ENCODE measurements at regions of chr1 and their contacts with region 1.

Region 1: DNA sequence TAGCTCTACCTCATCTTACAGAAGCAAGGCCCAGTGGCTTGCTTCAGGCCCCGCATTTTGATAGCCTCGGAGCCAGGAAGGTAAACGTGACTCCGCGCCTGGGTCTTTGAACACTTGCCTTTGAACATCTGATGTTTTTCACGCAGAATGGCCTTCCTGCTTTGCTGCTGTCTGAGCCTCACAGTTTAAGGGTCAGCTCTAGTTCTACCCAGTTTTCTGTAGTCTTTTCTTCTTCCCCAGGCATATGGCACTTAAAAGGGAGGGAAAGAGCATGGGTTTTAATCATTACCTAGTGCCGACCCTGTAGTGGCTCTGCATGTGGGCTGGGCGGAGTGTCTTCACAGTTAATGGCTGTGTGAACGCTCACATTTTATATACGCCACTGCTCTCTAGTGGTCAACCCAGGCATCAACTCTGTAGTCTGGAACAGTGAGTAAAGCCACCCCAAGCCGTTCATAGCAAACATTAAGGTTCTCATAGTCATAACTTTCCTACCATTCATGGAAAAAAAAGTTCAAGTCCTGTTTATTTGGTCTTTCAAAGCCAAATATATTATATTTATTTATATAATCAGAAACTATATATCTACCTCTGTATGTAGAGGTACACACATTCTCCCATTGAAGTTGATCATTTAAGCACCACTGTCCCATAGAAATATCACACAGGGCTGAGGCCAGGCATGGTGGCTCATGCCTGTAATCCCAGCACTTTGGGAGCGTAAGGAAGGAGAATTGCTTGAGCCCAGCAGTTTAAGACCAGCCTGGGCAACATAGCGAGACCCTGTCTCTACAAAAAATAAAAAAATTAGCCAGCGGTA is 78.1 kb downstream of the IER5 start:
- DNase-seq: peak; percentile 82 to 90 (median 84)
- ATAC-seq: peak; percentile 100
- H3K4me3 ChIP-seq: no peak overlapping the region
- H3K27ac ChIP-seq: no peak overlapping the region; the same call in 2 of the 3 replicates
- H3K4me1 ChIP-seq: no peaks in the 10 kb centered on the region; a peak in 1 of 5 replicates
- H3K27me3 ChIP-seq: no peaks in the 10 kb centered on the region
- CTCF ChIP-seq: peak; percentile 89 to 97 (median 94)
- EP300 ChIP-seq: no peak; the same call in 1 of the 2 replicates
- POLR2A ChIP-seq: no peak
- RAD21 ChIP-seq: peak; percentile 96 to 99

Region 2: GRCh38 chr1:180252638-180253536 is 913.7 kb before region 1 on chr1:
- CTCF ChIA-PET with region 1: no interaction called
- POLR2A ChIA-PET with region 1: no interaction called
- in situ Hi-C with region 1: loop called (anchors 25 kb)
- intact Hi-C with region 1: no loop called
- DNase-seq: peak; percentile 81 to 88 (median 86)
- ATAC-seq: peak; percentile 82
- H3K4me3 ChIP-seq: no peak overlapping the region
- H3K27ac ChIP-seq: no peak overlapping the region
- H3K4me1 ChIP-seq: peaks cover 0 to 21% of the 10 kb centered on the region in 2 experiments; a peak in 3 of 5 replicates
- H3K27me3 ChIP-seq: peaks cover 17 to 47% of the 10 kb centered on the region in 2 experiments; a peak in 4 of 5 replicates
- CTCF ChIP-seq: peak; percentile 96 to 99 (median 98)
- EP300 ChIP-seq: no peak
- POLR2A ChIP-seq: no peak
- RAD21 ChIP-seq: peak; percentile 87 to 97

Region 3: DNA sequence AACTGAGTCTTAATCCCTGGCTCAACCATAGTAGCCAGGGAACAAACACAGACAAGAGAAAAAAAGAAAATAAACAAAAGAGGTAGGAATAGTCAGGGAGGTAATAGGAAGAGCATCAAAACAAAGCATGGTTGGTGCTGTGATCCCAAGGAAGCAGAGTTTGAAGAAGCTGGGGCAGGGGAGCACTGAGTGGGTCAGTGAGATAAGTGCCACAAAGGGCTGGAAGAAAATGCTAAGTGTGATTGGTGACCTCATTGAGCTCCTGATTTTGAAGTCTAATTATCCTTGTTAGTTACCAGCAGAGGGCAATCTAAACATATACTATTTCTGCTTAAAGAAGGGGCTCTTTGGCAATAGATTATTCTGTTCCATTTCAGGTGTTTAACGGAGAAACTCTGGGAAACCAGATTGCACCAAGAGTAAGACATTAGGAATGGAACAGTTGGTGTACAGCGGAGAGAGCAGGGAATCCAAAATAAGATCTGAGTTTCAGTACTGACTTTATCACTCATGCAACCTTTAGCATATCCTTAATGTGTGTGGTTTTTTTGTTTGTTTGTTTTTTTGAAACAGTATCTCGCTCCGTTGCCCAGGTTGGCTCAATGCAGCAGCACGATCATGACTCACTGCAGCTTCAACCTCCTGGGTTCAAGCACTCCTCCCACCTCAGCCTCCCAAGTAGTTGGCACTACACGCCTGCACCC is 284.6 kb before region 1 on chr1:
- CTCF ChIA-PET with region 1: interaction called, 8 read pairs
- POLR2A ChIA-PET with region 1: interaction called, 3 read pairs
- in situ Hi-C with region 1: loop called (anchors 5 kb)
- intact Hi-C with region 1: loop called (anchors 1 kb)
- DNase-seq: peak; percentile 52 to 76 (median 68)
- ATAC-seq: peak; percentile 97
- H3K4me3 ChIP-seq: no peak overlapping the region
- H3K27ac ChIP-seq: no peak overlapping the region
- H3K4me1 ChIP-seq: peaks cover 0 to 3% of the 10 kb centered on the region in 2 experiments; a peak in 1 of 5 replicates
- H3K27me3 ChIP-seq: no peaks in the 10 kb centered on the region
- CTCF ChIP-seq: peak; percentile 45 to 80 (median 67); a peak in 5 of 6 replicates
- EP300 ChIP-seq: no peak
- POLR2A ChIP-seq: no peak
- RAD21 ChIP-seq: peak; percentile 85 to 91

Region 4: DNA sequence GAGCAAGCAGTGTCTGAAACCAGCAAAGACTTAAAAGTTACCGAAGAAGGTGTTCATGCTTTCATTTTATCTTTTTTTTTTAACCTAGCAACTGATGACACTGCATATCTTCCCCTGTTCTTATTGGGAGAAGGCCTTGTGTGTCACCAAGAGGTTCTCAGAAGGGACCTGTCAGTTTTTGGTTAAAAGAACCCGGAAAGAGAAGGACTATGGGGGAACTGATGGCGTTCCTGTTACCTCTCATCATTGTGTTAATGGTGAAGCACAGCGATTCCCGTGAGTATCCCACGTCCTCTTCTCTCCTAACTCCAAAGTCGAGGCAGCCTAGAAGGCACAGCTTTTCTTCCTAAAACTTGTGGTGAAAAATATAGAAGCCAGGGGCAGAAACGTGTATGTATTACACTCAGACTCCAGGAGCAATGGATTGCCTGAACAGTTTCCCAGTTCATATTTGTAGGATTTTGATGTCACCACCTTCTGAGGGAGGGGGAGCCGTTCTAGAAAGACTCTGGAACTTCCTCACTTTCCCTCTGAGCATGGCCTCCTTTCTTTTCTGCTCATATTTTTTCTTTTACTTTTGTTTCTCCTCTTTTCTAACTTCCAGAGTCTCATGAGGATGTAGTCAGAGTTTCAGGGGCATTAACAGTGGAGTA is 132.7 kb before region 1 on chr1 and contains the start of gene MR1:
- CTCF ChIA-PET with region 1: interaction called, 12 read pairs
- POLR2A ChIA-PET with region 1: no interaction called
- in situ Hi-C with region 1: no loop called
- intact Hi-C with region 1: loop called (anchors 1 kb)
- DNase-seq: peak; percentile 87 to 91 (median 89)
- ATAC-seq: peak; percentile 93
- H3K4me3 ChIP-seq: peak within 1 kb of the TSS; percentile 42
- H3K27ac ChIP-seq: peak within 1 kb of the TSS; percentile 74
- H3K4me1 ChIP-seq: peaks cover 9 to 36% of the 10 kb centered on the region in 2 experiments; a peak in 4 of 5 replicates
- H3K27me3 ChIP-seq: no peaks in the 10 kb centered on the region
- CTCF ChIP-seq: no peak
- EP300 ChIP-seq: no peak
- POLR2A ChIP-seq: peak; percentile 84
- RAD21 ChIP-seq: no peak
- polyA plus RNA-seq, gene MR1: 15.6 to 19.8 TPM

Region 5: DNA sequence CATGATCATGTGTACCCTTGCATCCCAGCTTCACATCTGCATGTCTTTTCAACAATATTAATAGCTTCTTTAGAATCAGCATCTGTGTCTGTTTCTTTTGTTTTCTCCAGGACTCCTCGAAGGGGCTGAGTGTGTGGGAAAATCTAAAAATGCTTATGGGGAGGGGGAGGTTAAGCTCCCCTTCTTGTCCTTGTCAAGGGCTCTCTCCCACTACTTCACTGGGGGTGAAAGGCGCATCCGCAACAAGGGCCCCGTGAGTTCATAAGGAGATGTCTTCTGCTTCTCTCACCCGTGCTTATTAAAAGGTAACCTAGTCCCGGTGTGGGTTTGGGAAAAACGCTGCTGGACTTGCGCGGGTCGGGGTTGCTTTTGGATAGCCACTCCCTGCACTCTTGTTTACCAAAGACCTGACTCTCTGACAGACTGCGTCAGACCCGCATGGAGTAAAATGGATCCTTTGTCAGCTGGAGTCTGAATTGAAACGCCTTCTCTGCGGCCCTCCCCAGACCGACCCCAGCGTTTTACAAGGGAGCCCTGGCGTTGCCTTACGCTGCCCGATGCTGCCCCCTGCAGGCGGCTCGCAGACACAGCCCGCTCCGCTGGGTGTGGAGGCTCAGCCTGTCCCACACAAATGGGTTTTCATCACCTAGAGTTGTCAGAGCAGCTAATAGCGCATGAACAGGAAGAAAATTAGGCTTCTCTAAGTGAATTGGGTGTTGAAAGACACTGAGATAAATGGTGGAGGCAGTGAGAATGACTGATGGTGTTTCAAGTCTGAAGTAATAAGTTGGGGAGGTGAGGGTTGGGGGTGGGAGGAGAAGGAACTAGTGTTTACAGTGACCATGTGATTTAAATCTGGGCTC is 24.3 kb before region 1 on chr1:
- CTCF ChIA-PET with region 1: no interaction called
- POLR2A ChIA-PET with region 1: no interaction called
- in situ Hi-C with region 1: no loop called
- intact Hi-C with region 1: loop called (anchors 1 kb)
- DNase-seq: peak; percentile 90 to 94 (median 94)
- ATAC-seq: peak; percentile 98
- H3K4me3 ChIP-seq: no peak overlapping the region
- H3K27ac ChIP-seq: peak overlapping the region; percentile 36; the same call in 1 of the 3 replicates
- H3K4me1 ChIP-seq: peaks cover 20 to 28% of the 10 kb centered on the region in 2 experiments
- H3K27me3 ChIP-seq: no peaks in the 10 kb centered on the region
- CTCF ChIP-seq: peak; percentile 98 to 100 (median 99)
- EP300 ChIP-seq: peak; percentile 46; the same call in 1 of the 2 replicates
- POLR2A ChIP-seq: no peak
- RAD21 ChIP-seq: peak; percentile 100

Region 6: GRCh38 chr1:181152892-181153633 is 13.5 kb before region 1 on chr1:
- CTCF ChIA-PET with region 1: interaction called, 4 read pairs
- POLR2A ChIA-PET with region 1: interaction called, 4 read pairs
- in situ Hi-C with region 1: no loop called
- intact Hi-C with region 1: loop called (anchors 1 kb)
- DNase-seq: peak; percentile 90 to 99 (median 94)
- ATAC-seq: peak; percentile 98
- H3K4me3 ChIP-seq: no peak overlapping the region
- H3K27ac ChIP-seq: peak overlapping the region; percentile 65
- H3K4me1 ChIP-seq: peaks cover 27 to 31% of the 10 kb centered on the region in 2 experiments
- H3K27me3 ChIP-seq: no peaks in the 10 kb centered on the region
- CTCF ChIP-seq: peak; percentile 71 to 86 (median 80)
- EP300 ChIP-seq: peak; percentile 99
- POLR2A ChIP-seq: no peak
- RAD21 ChIP-seq: peak; percentile 78 to 79

Measured in K562 (cell line).